CD8-positive, alpha-beta T cell (primary cell): ENCODE measurements at regions of chr11 and their contacts with region 1.

Region 1: GRCh38 chr11:66195867-66196266 is 72.6 kb upstream of the RAB1B start:
- DNase-seq: no peak
- ATAC-seq: no peak
- H3K4me3 ChIP-seq: no peak overlapping the region
- H3K4me3 Mint-ChIP-seq: no peak overlapping the region
- H3K27ac ChIP-seq: no peak overlapping the region
- H3K27ac Mint-ChIP-seq: no peak overlapping the region
- H3K4me1 ChIP-seq: no peaks in the 10 kb centered on the region
- H3K4me1 Mint-ChIP-seq: peaks cover 12% of the 10 kb centered on the region
- H3K27me3 ChIP-seq: no peaks in the 10 kb centered on the region
- H3K27me3 Mint-ChIP-seq: no peaks in the 10 kb centered on the region
- CTCF ChIP-seq: no peak

Region 2: DNA sequence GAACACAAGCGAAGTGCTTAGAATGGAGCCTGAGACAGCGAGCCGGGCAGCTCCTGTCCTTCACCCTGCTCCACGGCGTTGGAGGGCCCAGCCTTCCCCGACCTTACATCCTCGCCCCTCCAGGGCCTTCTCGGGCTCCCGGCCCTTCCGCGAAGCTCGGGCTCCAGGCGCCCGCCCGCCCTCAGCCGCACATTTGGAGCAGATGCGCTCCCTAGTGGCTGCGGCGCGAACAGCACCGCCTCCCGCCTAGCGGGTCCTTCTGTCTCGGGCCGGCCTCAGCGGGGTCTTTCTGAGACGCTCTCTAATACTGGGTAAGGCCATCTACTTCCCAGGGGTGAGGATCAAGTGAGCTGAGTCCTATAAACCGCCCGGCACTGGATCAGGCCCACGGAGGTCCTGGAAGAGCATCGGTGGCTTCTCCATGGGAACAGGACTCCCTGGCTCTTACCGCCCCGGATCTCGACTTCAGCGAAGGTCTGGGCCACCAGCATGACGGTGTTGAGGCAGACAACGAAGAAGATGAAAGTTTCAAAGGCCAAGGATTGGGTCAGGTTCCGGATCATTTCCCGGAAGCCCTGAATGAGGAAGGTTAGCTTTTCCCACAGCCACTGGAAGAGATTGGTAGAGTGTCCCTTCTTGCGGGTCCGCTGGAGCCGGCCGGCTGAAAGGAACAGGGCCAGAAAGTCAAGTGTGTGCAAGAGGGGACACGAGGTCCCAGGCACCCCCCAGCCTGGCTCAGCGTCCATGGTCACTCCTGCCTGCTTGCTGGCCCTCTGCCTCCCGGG is 173.3 kb before region 1 on chr11:
- CTCF ChIA-PET with region 1: no interaction called
- POLR2A ChIA-PET with region 1: no interaction called
- intact Hi-C with region 1: no loop called
- DNase-seq: peak; percentile 63 to 86 (median 80)
- ATAC-seq: peak; percentile 99
- H3K4me3 ChIP-seq: peak overlapping the region in 1 of 2 experiments; percentile 4
- H3K4me3 Mint-ChIP-seq: peak overlapping the region; percentile 43
- H3K27ac ChIP-seq: no peak overlapping the region
- H3K27ac Mint-ChIP-seq: no peak overlapping the region
- H3K4me1 ChIP-seq: peaks cover 7% of the 10 kb centered on the region
- H3K4me1 Mint-ChIP-seq: peaks cover 5% of the 10 kb centered on the region
- H3K27me3 ChIP-seq: no peaks in the 10 kb centered on the region
- H3K27me3 Mint-ChIP-seq: peaks cover 3% of the 10 kb centered on the region
- CTCF ChIP-seq: peak; percentile 97

Region 3: GRCh38 chr11:66183494-66184048 is 12.3 kb before region 1 on chr11:
- CTCF ChIA-PET with region 1: no interaction called
- POLR2A ChIA-PET with region 1: interaction called, 3 read pairs
- intact Hi-C with region 1: loop called in 1 of 2 experiments (anchors 2 kb)
- DNase-seq: peak in 4 of 9 experiments; percentile 8 to 69 (median 54)
- ATAC-seq: peak; percentile 89
- H3K4me3 ChIP-seq: no peak overlapping the region
- H3K4me3 Mint-ChIP-seq: no peak overlapping the region
- H3K27ac ChIP-seq: no peak overlapping the region
- H3K27ac Mint-ChIP-seq: peak overlapping the region; percentile 22
- H3K4me1 ChIP-seq: peaks cover 15% of the 10 kb centered on the region
- H3K4me1 Mint-ChIP-seq: peaks cover 63% of the 10 kb centered on the region
- H3K27me3 ChIP-seq: no peaks in the 10 kb centered on the region
- H3K27me3 Mint-ChIP-seq: no peaks in the 10 kb centered on the region
- CTCF ChIP-seq: no peak

Region 4: GRCh38 chr11:66393954-66394353 is 198.1 kb after region 1 on chr11:
- CTCF ChIA-PET with region 1: no interaction called
- POLR2A ChIA-PET with region 1: no interaction called
- intact Hi-C with region 1: no loop called
- DNase-seq: no peak
- ATAC-seq: no peak
- H3K4me3 ChIP-seq: no peak overlapping the region
- H3K4me3 Mint-ChIP-seq: no peak overlapping the region
- H3K27ac ChIP-seq: no peak overlapping the region
- H3K27ac Mint-ChIP-seq: no peak overlapping the region
- H3K4me1 ChIP-seq: no peaks in the 10 kb centered on the region
- H3K4me1 Mint-ChIP-seq: no peaks in the 10 kb centered on the region
- H3K27me3 ChIP-seq: no peaks in the 10 kb centered on the region
- H3K27me3 Mint-ChIP-seq: peaks cover 10% of the 10 kb centered on the region
- CTCF ChIP-seq: no peak

Region 5: GRCh38 chr11:66570117-66570819 is 374.4 kb after region 1 on chr11:
- CTCF ChIA-PET with region 1: no interaction called
- POLR2A ChIA-PET with region 1: no interaction called
- intact Hi-C with region 1: no loop called
- DNase-seq: no peak
- ATAC-seq: no peak
- H3K4me3 ChIP-seq: no peak overlapping the region
- H3K4me3 Mint-ChIP-seq: peak overlapping the region; percentile 38
- H3K27ac ChIP-seq: no peak overlapping the region
- H3K27ac Mint-ChIP-seq: no peak overlapping the region
- H3K4me1 ChIP-seq: peaks cover 12% of the 10 kb centered on the region
- H3K4me1 Mint-ChIP-seq: peaks cover 10% of the 10 kb centered on the region
- H3K27me3 ChIP-seq: peaks cover 0 to 3% of the 10 kb centered on the region in 2 experiments
- H3K27me3 Mint-ChIP-seq: peaks cover 2% of the 10 kb centered on the region
- CTCF ChIP-seq: no peak